ENCODE measurements at regions of chr15 and their contacts with region 1.

Region 1: DNA sequence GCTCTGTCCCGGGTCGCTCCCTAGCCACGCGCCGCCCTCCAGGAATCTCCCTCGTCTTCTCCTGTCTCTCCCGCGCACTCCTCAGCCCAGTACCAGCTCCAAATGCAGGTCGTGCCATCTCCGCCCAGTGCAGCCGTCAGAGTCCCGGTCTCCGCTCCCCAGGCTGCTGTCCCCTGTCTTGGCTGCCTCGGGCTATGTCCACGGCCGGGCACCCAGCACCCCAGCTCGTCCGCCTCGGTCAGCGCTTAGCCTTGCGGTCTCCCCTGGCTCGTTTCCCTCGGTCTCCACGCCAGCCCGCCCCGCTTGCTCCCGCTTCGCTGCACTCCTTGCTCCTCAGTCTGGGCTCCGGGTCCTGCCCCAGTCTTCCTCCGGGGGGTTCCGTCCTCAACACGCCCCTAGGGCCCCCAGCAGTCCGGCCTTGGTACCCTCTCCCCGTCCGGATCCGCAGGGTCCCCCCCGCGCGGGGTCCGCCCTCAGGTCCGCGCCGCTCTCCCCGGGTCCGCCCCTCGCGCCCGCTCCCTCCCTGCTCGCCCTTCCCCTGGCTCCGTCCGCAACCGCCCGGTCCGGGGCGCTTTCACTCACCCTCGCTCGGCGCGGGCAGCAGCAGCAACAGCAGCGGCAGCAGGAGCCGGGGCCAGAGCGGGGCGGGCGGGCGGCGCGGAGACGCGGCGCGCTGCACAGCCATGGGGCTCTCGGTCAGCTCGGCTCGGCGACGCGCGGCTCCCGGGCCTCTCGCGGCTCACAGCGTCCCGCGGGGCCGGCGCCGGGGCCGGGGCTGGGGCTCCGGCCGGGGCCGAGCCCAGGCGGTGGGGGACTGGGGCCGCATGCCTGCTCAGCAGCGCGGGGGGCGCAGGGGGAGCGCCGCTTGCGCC is 462 bp downstream of the IGDCC3 start:
- DNase-seq: no peak
- H3K4me3 ChIP-seq: peak overlapping the region; percentile 52
- CTCF ChIP-seq: no peak

Region 2: GRCh38 chr15:65305145-65305758 is 72.1 kb before region 1 on chr15:
- in situ Hi-C with region 1: no loop called
- DNase-seq: no peak
- H3K4me3 ChIP-seq: no peak overlapping the region
- CTCF ChIP-seq: no peak

Region 3: GRCh38 chr15:65323071-65323511 is 54.2 kb before region 1 on chr15:
- in situ Hi-C with region 1: loop called (anchors 10 kb)
- DNase-seq: peak; percentile 41
- H3K4me3 ChIP-seq: no peak overlapping the region
- CTCF ChIP-seq: no peak

Region 4: DNA sequence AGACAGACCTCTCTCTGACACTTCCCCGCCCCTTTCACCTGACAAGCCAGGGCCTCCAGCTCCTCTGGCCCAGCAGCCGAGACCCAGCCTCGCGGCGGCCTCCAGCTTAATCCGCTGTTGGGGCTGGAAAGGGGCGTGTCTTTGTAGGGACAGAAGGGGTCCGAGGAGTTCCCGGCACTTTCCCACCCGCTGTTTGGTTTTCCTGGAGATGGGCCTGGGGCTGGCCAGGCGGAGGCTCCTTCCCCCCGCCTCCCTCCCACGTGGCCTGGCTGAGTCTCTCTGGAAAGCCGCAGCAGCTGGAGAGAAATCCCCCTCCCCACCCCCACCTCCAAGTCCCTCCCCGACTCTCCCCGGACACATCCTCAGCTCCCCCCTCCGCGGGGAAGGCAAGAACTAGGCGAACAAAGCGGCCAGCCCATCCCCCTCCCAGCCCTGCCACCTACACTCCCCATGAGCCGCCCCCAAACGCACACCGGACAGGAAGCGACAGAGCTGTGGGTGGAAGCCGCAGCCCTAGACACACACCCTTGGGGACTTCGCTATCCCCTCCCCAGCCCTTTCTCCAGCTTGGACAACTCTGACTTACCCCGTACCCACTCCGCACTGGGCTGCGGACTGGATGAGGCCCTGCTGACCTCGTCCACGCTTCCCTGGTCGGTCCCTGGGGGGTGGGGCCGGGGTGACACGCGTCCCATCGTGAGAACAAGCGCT is 44.2 kb after region 1 on chr15:
- in situ Hi-C with region 1: no loop called
- DNase-seq: peak; percentile 83
- H3K4me3 ChIP-seq: peak overlapping the region; percentile 75
- CTCF ChIP-seq: no peak